Colonic mucosa (tissue), 4 donors: ENCODE measurements at regions of chr17 and their contacts with region 1.

Region 1: DNA sequence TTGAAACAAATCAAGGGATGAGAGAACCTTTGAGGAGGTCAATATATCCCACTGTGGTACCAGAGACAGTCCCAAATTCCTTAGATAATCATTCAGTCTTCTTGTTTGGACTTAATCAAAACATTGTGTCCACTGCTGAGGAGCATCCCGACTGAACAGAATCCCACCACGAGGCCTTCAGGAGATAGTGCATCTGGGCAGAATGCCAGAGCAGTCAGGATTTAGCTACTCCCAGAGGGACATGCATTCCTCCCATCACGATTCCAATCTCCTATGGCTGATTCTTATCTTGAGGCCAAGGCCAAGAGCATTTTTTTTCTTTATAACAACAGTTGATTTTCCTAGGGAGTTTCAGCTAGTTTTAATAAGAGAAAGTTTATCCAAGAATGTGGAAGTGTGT is 87.4 kb upstream of the COX10 start:
- DNase-seq: no peak
- H3K4me3 ChIP-seq: no peak overlapping the region
- H3K27ac ChIP-seq: no peak overlapping the region
- H3K4me1 ChIP-seq: no peaks in the 10 kb centered on the region
- H3K27me3 ChIP-seq: no peaks in the 10 kb centered on the region
- CTCF ChIP-seq: no peak

Region 2: GRCh38 chr17:14011740-14012405 is 30.0 kb after region 1 on chr17:
- intact Hi-C with region 1: loop called (anchors 2 kb)
- DNase-seq: no peak
- H3K4me3 ChIP-seq: no peak overlapping the region
- H3K27ac ChIP-seq: no peak overlapping the region
- H3K4me1 ChIP-seq: no peaks in the 10 kb centered on the region
- H3K27me3 ChIP-seq: no peaks in the 10 kb centered on the region
- CTCF ChIP-seq: no peak